Tibial artery (tissue), 4 donors: ENCODE measurements at regions of chr5 and their contacts with region 1.

Region 1: GRCh38 chr5:55509796-55510522 is 24.8 kb downstream of the PLPP1 start:
- DNase-seq: no peak
- H3K4me3 ChIP-seq: no peak overlapping the region
- H3K27ac ChIP-seq: peak overlapping the region in 1 of 2 donors; percentile 38
- H3K4me1 ChIP-seq: peaks cover 0 to 83% (median 36%) of the 10 kb centered on the region in 4 donors
- H3K27me3 ChIP-seq: no peaks in the 10 kb centered on the region
- CTCF ChIP-seq: no peak

Region 2: GRCh38 chr5:55456216-55456895 is 53.6 kb before region 1 on chr5:
- intact Hi-C with region 1: loop called (anchors 10 kb)
- DNase-seq: no peak
- H3K4me3 ChIP-seq: no peak overlapping the region
- H3K27ac ChIP-seq: peak overlapping the region in 1 of 2 donors; percentile 5
- H3K4me1 ChIP-seq: peaks cover 0 to 46% (median 8%) of the 10 kb centered on the region in 4 donors
- H3K27me3 ChIP-seq: no peaks in the 10 kb centered on the region
- CTCF ChIP-seq: no peak